ENCODE measurements at regions of chr11 and their contacts with region 1.

Region 1: GRCh38 chr11:109956124-109956793 is 136.9 kb upstream of the ZC3H12C start:
- DNase-seq: no peak
- CTCF ChIP-seq: no peak

Region 2: DNA sequence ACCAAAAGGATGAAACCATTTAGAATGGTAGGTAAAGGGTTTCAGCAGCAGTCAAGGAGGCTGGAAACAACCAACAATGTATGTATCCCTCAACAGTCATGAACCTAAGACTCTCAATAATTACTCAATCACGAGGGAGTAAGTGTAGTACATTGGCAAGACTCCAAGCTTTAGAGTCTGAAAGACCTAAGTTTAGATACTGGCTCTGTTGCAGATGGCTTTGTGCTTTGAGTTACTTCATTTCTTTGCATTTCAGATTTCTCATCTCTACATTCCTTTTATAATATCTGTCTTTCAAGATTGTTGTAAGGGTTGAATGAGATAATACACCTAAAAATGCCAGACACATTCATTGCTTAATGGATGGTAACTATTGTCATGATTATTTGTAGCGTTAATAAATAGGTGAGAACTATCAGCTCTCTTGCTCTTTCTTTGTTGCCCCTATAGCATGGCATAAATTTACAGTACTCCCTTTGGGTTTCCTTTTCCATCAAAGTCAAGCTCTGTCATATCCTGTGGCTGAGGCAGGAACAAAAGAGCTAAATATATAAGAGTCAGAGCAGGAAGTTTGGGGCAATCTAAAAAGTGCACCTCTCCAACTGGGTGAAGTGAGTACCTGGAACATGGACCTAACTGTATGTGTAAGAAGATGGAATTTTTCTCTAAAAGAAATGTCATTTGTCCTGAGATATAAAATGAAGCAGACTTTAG is 91.3 kb before region 1 on chr11:
- in situ Hi-C with region 1: no loop called
- DNase-seq: peak; percentile 25
- CTCF ChIP-seq: no peak

Region 3: DNA sequence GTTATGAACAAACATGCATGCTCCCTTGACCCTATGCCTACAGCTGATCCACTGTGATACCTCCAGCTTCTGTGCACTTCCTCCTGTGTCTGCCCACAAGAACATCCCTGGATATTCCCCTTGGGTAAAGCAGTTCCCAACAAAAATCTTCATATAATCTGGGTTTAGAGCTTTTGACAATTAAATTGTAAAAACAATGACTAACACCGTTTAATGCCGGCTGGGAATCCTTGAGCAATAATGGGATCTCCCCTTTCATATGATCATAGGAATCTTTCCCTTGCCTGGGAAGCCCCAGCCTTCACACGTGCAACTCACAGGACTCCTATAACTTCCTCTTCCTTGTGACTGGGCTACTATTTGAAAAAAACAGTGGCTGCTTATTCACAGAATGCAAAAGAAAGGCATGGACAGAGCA is 130.6 kb after region 1 on chr11:
- in situ Hi-C with region 1: loop called (anchors 10 kb)
- DNase-seq: no peak
- CTCF ChIP-seq: no peak

Region 4: GRCh38 chr11:110195845-110196754 is 239.8 kb after region 1 on chr11:
- in situ Hi-C with region 1: no loop called
- DNase-seq: no peak
- CTCF ChIP-seq: no peak

Region 5: DNA sequence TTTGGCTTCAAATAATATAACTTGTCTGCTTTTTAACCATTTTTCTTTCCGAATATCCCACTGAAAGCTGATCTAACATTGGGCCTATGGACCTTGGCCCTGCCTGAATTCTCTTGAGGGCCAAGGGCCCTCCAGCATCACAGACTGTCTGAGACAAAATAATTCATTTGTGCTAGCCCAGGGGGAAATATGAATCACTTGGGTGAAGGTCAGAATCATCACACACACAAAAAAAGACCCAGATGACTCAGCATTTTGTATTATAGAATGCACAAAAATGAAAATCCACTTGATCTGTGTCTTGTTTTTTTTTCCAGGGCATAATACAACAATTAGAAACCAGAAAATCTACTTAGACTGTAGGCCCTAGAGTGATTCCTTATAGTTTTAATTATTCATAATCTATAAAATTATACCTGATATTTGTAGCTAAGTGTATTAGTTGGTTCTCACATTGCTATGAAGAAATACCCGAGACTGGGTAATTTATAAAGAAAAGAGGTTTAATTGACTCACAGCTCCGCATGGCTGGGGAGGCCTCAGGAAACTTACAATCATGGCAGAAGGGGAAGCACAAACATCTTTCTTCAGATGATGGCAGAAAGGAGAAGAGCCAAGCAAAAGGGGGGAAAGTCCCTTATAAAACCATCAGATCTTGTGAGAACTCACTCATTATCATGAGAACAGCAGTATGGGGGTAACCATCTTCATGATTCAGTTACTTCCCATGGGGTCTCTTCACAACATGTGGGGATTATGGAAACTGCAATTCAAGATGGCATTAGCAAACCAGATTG is 355.7 kb after region 1 on chr11:
- in situ Hi-C with region 1: no loop called
- DNase-seq: no peak
- CTCF ChIP-seq: no peak